ENCODE measurements at regions of chr11 and their contacts with region 1.

Region 1: DNA sequence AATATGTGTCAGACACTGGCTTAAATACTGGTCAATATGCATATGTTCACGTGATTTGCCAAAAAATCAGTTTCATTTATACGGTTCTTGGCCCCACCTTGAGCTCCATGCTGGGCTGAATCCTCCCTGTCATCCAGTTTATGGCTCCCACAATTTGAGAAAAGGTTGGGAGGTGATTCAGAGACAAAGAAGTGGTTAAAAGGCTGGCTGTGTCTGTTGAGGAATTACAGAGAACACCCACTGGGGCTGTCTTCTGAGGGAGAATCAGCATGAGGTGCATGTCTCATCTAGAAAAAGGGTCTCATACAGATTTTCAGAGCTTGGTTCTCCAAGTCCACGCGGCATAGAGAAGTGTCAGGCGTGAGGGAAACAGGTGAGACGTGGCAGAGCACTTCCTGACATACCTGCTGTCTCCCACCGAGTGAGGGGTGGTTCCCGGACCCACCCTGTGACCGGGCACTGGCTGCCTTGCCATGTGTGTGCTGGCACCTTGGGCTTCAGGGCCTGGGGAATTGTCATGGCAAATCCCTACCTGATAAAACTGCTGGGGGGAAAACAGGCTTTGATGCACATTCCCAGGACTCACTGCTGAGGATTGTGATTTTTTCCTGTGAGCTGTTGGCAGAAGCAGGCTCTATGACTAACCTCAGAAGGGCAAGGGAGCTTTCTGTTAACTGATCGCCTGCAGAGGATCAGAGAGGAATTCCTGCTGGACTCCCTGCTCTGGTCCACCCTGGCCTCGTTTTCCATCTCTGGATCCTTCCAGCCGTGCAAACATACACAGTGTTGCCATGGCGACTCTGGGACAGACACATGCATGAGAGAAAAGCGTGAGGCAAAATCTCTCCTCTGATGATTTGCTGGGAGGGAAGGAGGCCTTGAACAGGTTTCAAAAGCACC is 223.6 kb downstream of the ADAMTS15 start:
- DNase-seq: peak; percentile 59 to 83
- ATAC-seq: peak; percentile 56 to 85 (median 74)
- H3K4me3 ChIP-seq: no peak overlapping the region
- H3K27ac ChIP-seq: peak overlapping the region in 8 of 10 donors; percentile 15 to 57 (median 49)
- H3K4me1 ChIP-seq: peaks cover 8 to 49% (median 43%) of the 10 kb centered on the region in 9 donors
- H3K27me3 ChIP-seq: no peaks in the 10 kb centered on the region
- CTCF ChIP-seq: no peak

Region 2: GRCh38 chr11:130527636-130528297 is 144.3 kb before region 1 on chr11:
- intact Hi-C with region 1: loop called in 3 of 10 experiments (anchors 5 to 10 kb)
- DNase-seq: peak; percentile 31 to 55
- ATAC-seq: peak; percentile 40 to 78 (median 69)
- H3K4me3 ChIP-seq: no peak overlapping the region
- H3K27ac ChIP-seq: peak overlapping the region in 8 of 10 donors; percentile 36 to 76 (median 51)
- H3K4me1 ChIP-seq: peaks cover 27 to 45% (median 36%) of the 10 kb centered on the region in 9 donors
- H3K27me3 ChIP-seq: no peaks in the 10 kb centered on the region
- CTCF ChIP-seq: no peak